AG04449 (cell line): ENCODE measurements at regions of chr4 and their contacts with region 1.

Region 1: GRCh38 chr4:56799824-56800756 is 21.4 kb downstream of the SPINK2 start:
- DNase-seq: peak; percentile 36
- H3K4me3 ChIP-seq: peak overlapping the region; percentile 73
- CTCF ChIP-seq: peak; percentile 94

Region 2: GRCh38 chr4:56544573-56545131 is 255.4 kb before region 1 on chr4:
- CTCF ChIA-PET with region 1: interaction called, 25 read pairs
- POLR2A ChIA-PET with region 1: no interaction called
- DNase-seq: no peak
- H3K4me3 ChIP-seq: peak overlapping the region; percentile 50
- CTCF ChIP-seq: peak; percentile 99

Region 3: DNA sequence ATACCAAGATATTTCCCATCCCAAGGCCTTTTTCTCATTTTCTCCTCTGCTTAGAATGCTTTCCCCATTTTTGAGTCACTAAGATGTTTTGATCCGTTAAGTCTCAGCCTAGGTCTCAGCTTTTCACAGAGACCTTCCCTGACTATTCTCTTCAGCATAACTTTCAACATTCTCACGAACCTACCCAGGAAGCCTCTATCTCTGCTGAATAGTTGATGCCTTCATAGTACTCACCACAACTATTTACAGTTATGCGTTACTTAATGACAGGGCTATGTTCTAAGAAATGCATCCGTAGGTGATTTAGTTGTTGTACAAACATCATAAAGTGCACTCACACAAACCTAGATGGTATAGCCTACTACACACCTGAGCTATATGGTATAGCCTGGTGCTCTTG is 230.0 kb before region 1 on chr4:
- CTCF ChIA-PET with region 1: interaction called, 115 read pairs
- POLR2A ChIA-PET with region 1: no interaction called
- DNase-seq: peak; percentile 9
- H3K4me3 ChIP-seq: no peak overlapping the region
- CTCF ChIP-seq: no peak

Region 4: DNA sequence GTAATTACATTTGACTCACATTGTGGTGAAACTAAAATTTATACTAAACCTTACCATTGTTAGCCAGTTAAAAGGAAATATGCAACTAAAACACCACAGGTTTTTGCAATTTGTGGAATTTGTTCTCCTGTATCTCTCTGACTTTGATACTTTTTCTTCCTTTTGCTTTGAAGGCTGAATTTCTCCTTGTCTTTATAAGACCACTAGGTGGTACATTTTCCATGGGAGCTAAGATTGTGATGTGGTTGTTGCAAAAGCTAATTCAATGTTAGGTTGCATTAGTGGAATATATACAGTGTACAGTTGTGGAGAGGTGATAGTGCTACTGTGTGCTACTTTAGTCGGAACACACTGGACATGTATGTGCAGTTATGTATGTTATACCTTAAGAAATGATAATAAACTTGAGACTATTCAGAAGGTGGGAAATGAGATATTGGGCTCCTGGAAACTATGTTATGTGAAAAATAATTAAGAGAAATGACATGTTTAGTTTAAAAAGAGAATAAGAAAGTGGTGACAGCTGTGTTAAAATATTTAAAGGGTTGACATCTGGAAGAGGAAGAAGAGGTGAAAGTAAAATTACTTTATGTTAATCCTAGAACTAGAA is 224.2 kb before region 1 on chr4:
- CTCF ChIA-PET with region 1: interaction called, 115 read pairs
- POLR2A ChIA-PET with region 1: no interaction called
- DNase-seq: peak; percentile 12
- H3K4me3 ChIP-seq: no peak overlapping the region
- CTCF ChIP-seq: peak; percentile 37

Region 5: DNA sequence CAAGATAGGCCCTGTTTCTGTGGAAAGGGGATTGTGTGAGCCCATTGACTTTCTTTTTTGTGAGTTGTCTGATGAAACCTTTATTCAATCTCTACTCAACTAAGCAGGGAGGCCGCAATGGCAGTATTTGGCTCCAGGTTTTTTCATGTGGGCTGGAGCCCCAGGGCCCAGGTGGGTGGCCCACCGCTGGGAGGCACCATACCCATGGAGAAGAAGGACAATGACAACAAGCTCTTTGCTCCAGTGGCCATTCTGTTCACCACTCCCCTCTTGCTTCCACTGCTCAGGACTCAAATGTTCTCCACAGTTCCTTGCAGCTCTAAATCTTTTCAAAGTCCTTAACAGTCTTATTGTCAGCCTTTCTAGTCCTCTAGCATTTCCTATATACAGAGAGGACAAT is 173.1 kb before region 1 on chr4:
- CTCF ChIA-PET with region 1: interaction called, 14 read pairs
- POLR2A ChIA-PET with region 1: no interaction called
- DNase-seq: no peak
- H3K4me3 ChIP-seq: no peak overlapping the region
- CTCF ChIP-seq: no peak

Region 6: GRCh38 chr4:56772134-56772533 is 28.0 kb before region 1 on chr4:
- CTCF ChIA-PET with region 1: interaction called, 10 read pairs
- POLR2A ChIA-PET with region 1: no interaction called
- DNase-seq: no peak
- H3K4me3 ChIP-seq: no peak overlapping the region
- CTCF ChIP-seq: no peak

Region 7: DNA sequence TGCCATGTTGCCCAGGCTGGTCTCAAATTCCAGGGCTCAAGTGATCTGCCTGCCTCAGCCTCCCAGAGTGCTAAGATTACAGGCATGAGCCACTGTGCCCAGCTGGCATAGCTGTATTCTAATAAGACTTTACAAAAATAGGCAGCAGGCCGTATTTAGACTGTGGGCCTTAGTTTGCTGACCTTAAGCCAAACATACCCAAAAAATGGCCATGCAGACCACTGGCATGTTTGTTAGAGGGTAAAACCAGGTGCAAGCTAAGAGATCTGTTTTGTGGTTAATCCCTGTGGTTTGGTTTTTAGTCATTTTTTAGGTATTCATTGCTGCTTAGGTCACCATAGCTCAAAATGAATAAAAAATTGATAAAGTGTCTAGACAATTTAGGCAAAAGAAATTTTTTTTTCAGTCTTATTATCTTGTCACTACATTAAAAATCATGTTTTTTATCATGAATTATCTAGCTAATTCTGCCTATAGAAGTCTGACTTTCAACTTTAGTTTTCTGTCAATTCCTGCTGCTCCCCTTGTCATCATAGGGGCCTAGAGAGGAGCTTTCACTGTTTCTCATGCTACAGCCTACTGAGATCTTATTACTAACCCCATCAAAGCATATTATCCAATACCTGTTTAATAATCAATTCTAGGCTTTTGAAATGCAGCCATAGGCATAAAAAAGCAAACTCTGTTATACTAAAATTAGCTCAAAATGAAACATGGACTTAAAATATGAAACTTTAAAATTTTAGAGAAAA is 28.9 kb after region 1 on chr4:
- CTCF ChIA-PET with region 1: interaction called, 16 read pairs
- POLR2A ChIA-PET with region 1: no interaction called
- DNase-seq: no peak
- H3K4me3 ChIP-seq: no peak overlapping the region
- CTCF ChIP-seq: no peak